ENCODE measurements at regions of chr3 and their contacts with region 1.

Region 1: GRCh38 chr3:192851821-192852424 is 65.7 kb downstream of the MB21D2 start:
- DNase-seq: no peak
- ATAC-seq: peak; percentile 75
- H3K4me3 ChIP-seq: peak overlapping the region; percentile 18; the same call in 1 of the 2 replicates
- H3K27ac ChIP-seq: peak overlapping the region; percentile 81
- H3K4me1 ChIP-seq: peaks cover 58% of the 10 kb centered on the region
- H3K27me3 ChIP-seq: no peaks in the 10 kb centered on the region
- CTCF ChIP-seq: no peak
- EP300 ChIP-seq: peak in 1 of 2 experiments; percentile 63; a peak in 1 of 4 replicates
- POLR2A ChIP-seq: no peak
- RAD21 ChIP-seq: no peak

Region 2: GRCh38 chr3:192825657-192826200 is 26.2 kb before region 1 on chr3:
- CTCF ChIA-PET with region 1: interaction called, 6 read pairs
- POLR2A ChIA-PET with region 1: interaction called, 5 read pairs
- RAD21 ChIA-PET with region 1: interaction called, 83 read pairs
- SMC1A ChIA-PET with region 1: interaction called, 82 read pairs
- in situ Hi-C with region 1: no loop called
- intact Hi-C with region 1: loop called (anchors 2 kb)
- DNase-seq: no peak
- ATAC-seq: peak; percentile 76
- H3K4me3 ChIP-seq: no peak overlapping the region
- H3K27ac ChIP-seq: no peak overlapping the region
- H3K4me1 ChIP-seq: peaks cover 20% of the 10 kb centered on the region
- H3K27me3 ChIP-seq: no peaks in the 10 kb centered on the region
- CTCF ChIP-seq: peak in 2 of 3 experiments; percentile 0 to 20; a peak in 1 of 6 replicates
- EP300 ChIP-seq: peak; percentile 83 to 95; a peak in 3 of 4 replicates
- POLR2A ChIP-seq: no peak
- RAD21 ChIP-seq: 0 out of 2 replicates have a peak, but pooled peaks have one; percentile 14

Region 3: GRCh38 chr3:192864941-192865340 is 13.0 kb after region 1 on chr3:
- CTCF ChIA-PET with region 1: interaction called, 4 read pairs
- POLR2A ChIA-PET with region 1: interaction called, 3 read pairs
- RAD21 ChIA-PET with region 1: interaction called, 15 read pairs
- SMC1A ChIA-PET with region 1: interaction called, 17 read pairs
- in situ Hi-C with region 1: no loop called
- intact Hi-C with region 1: no loop called
- DNase-seq: no peak
- ATAC-seq: peak; percentile 70
- H3K4me3 ChIP-seq: no peak overlapping the region
- H3K27ac ChIP-seq: peak overlapping the region; percentile 80
- H3K4me1 ChIP-seq: peaks cover 42% of the 10 kb centered on the region
- H3K27me3 ChIP-seq: no peaks in the 10 kb centered on the region
- CTCF ChIP-seq: no peak
- EP300 ChIP-seq: no peak
- POLR2A ChIP-seq: no peak
- RAD21 ChIP-seq: no peak

Region 4: GRCh38 chr3:192887047-192887446 is 35.1 kb after region 1 on chr3:
- CTCF ChIA-PET with region 1: interaction called, 13 read pairs
- POLR2A ChIA-PET with region 1: interaction called, 16 read pairs
- RAD21 ChIA-PET with region 1: interaction called, 105 read pairs
- SMC1A ChIA-PET with region 1: interaction called, 283 read pairs
- in situ Hi-C with region 1: no loop called
- intact Hi-C with region 1: no loop called
- DNase-seq: no peak
- ATAC-seq: no peak; the same call in 2 of the 3 replicates
- H3K4me3 ChIP-seq: no peak overlapping the region
- H3K27ac ChIP-seq: no peak overlapping the region
- H3K4me1 ChIP-seq: peaks cover 21% of the 10 kb centered on the region
- H3K27me3 ChIP-seq: no peaks in the 10 kb centered on the region
- CTCF ChIP-seq: no peak
- EP300 ChIP-seq: no peak
- POLR2A ChIP-seq: no peak
- RAD21 ChIP-seq: no peak

Region 5: GRCh38 chr3:192899540-192899982 is 47.6 kb after region 1 on chr3:
- CTCF ChIA-PET with region 1: interaction called, 27 read pairs
- POLR2A ChIA-PET with region 1: interaction called, 9 read pairs
- RAD21 ChIA-PET with region 1: interaction called, 105 read pairs
- SMC1A ChIA-PET with region 1: interaction called, 283 read pairs
- in situ Hi-C with region 1: no loop called
- intact Hi-C with region 1: no loop called
- DNase-seq: no peak
- ATAC-seq: peak; percentile 50
- H3K4me3 ChIP-seq: no peak overlapping the region
- H3K27ac ChIP-seq: peak overlapping the region; percentile 70
- H3K4me1 ChIP-seq: peaks cover 49% of the 10 kb centered on the region
- H3K27me3 ChIP-seq: no peaks in the 10 kb centered on the region
- CTCF ChIP-seq: no peak
- EP300 ChIP-seq: no peak
- POLR2A ChIP-seq: 0 out of 2 replicates have a peak, but pooled peaks have one; percentile 2
- RAD21 ChIP-seq: no peak

Region 6: GRCh38 chr3:193174140-193174539 is 322.2 kb after region 1 on chr3:
- CTCF ChIA-PET with region 1: no interaction called
- POLR2A ChIA-PET with region 1: no interaction called
- RAD21 ChIA-PET with region 1: no interaction called
- SMC1A ChIA-PET with region 1: no interaction called
- in situ Hi-C with region 1: no loop called
- intact Hi-C with region 1: no loop called
- DNase-seq: no peak
- ATAC-seq: no peak
- H3K4me3 ChIP-seq: no peak overlapping the region
- H3K27ac ChIP-seq: no peak overlapping the region
- H3K4me1 ChIP-seq: no peaks in the 10 kb centered on the region
- H3K27me3 ChIP-seq: no peaks in the 10 kb centered on the region
- CTCF ChIP-seq: no peak
- EP300 ChIP-seq: no peak
- POLR2A ChIP-seq: no peak
- RAD21 ChIP-seq: no peak